HCT116 (cell line): ENCODE measurements at regions of chr4 and their contacts with region 1.

Region 1: DNA sequence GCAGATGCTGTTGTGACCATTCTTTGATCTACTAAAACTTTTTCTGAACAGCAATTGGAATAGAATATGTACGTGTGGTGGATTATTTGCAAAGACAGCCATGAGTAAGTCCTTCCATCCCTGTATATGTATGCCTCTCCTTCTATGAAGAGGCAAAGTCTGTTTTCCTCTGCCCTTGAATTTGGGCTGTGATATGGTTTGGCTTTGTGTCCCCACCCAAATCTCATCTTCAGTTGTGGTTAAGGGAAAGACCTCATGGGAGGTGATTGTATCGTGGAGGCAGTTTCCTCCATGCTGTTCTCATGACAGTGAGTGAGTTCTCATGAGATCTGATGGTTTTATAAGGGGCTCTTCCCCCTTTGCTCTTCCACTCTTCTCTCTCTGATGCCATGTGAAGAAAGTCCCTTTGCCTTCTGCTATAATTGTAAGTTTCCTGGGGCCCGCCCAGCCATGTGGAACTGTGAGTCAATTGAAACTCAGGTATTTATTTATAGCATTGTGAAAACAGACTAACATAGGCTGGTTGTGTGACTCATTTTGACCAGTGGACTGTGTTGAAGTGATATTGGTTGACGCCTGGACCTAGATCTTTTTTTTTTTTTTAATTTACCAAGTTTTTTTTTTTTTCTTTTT is 108.3 kb upstream of the CAMK2D start:
- DNase-seq: peak; percentile 1
- ATAC-seq: no peak
- H3K4me3 ChIP-seq: no peak overlapping the region
- H3K27ac ChIP-seq: no peak overlapping the region
- H3K4me1 ChIP-seq: peaks cover 0 to 5% of the 10 kb centered on the region in 2 experiments; a peak in 2 of 4 replicates
- H3K27me3 ChIP-seq: no peaks in the 10 kb centered on the region
- CTCF ChIP-seq: no peak
- POLR2A ChIP-seq: no peak
- RAD21 ChIP-seq: no peak

Region 2: DNA sequence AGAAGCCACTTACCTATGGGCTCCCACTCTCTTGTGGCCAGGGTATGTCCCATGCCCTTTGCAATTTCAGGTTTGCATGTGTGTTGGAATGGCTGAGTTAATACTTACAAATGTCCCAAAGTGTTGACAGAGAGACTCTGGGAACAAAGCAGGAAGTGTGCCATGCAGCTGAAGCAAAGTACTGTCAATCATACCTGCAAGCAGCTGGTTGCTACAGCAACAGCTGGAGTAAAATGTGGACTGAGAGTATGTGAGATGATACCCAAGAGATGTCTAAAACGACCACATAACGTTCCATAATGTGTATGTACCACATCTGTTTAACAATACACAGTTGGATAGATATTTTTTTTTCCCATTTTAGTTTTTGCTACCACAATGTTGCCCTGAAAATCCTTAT is 25.5 kb before region 1 on chr4:
- CTCF ChIA-PET with region 1: no interaction called
- POLR2A ChIA-PET with region 1: no interaction called
- RAD21 ChIA-PET with region 1: no interaction called
- intact Hi-C with region 1: loop called (anchors 2 kb)
- DNase-seq: no peak
- ATAC-seq: no peak
- H3K4me3 ChIP-seq: no peak overlapping the region
- H3K27ac ChIP-seq: no peak overlapping the region
- H3K4me1 ChIP-seq: no peaks in the 10 kb centered on the region
- H3K27me3 ChIP-seq: no peaks in the 10 kb centered on the region
- CTCF ChIP-seq: no peak
- POLR2A ChIP-seq: no peak
- RAD21 ChIP-seq: no peak